ENCODE measurements at regions of chr3 and their contacts with region 1.

Region 1: DNA sequence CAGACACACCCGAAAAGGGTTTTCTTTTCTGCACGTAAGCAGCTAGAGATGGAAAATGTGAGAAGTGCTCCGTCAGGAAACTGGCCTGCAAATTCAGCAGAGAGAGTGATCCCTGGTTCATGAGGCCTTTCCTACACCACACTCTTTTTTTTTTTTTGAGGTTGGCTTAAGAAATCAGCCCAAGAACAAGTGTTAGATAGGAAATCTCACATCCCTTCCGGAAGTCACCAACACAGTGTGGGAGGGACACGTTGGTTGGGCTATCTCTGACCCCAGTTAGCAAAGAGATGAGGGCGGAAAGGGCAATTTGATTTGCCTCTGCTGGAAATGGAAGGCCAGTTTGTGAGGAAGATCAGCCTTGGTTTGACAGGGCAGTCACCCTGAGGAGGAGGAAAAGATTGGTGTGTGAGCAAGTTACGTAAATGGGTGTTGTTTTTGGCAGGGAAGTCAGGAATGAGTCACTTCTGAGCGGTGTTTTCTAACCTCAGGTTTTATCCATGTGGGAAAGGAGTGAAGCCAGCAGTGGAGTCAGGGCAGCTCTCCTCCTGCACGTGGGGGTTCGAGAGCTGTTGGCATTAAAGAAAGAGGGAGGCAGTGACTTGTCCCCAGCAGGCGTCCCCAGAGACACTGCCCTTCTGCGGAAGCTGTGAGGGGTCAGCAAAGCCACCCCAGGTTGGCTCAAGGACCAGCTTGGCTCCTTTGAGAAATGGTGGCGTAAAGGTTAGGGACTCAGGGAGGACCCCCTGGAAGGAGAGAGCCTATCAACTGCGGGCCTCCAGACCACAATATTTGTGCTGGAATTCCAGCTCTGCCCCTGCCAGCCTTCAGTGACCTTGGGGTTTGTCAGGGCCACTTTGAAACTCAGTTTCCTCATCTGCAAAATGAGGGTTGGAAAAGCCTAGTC is 237.6 kb upstream of the BHLHE40 start:
- DNase-seq: no peak
- H3K4me3 Mint-ChIP-seq: peak overlapping the region; percentile 74
- H3K27ac Mint-ChIP-seq: peak overlapping the region; percentile 89
- H3K4me1 Mint-ChIP-seq: peaks cover 79% of the 10 kb centered on the region
- H3K27me3 Mint-ChIP-seq: no peaks in the 10 kb centered on the region

Region 2: DNA sequence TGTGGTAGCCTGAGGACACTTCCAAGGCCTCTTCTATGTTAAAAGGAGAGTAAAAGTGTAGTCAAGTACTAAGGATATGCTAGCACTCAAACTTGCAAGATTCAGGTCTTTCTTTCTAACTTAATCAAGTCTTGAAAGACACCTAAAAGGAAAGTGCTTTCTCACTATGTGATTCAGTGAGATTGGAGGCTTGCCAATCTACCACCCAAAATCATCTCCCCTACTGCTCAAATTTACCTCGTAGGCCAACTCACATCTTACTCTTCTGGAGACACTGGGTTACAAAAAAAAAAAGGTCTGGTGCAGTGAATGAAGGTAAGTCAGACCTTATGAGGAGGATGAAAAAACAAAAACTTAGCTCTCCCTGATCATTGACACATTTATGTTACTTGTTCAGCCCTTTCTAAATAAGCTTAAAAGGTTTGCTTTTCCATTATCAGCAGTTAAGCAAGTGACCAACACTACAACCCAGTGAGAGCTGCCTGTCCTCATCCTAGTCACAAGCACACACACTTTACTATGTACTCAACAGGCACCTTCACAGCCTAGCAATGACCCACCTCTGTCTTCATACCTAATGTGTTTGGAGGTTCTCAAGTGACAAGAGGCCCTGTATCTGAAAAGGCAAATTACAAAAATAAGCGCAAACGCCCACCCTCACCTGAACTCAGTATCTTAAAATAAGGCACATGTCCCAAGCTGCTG is 294.2 kb before region 1 on chr3:
- intact Hi-C with region 1: no loop called
- DNase-seq: no peak
- H3K4me3 Mint-ChIP-seq: no peak overlapping the region
- H3K27ac Mint-ChIP-seq: no peak overlapping the region
- H3K4me1 Mint-ChIP-seq: no peaks in the 10 kb centered on the region
- H3K27me3 Mint-ChIP-seq: no peaks in the 10 kb centered on the region

Region 3: GRCh38 chr3:4797201-4797705 is 55.6 kb after region 1 on chr3:
- intact Hi-C with region 1: no loop called
- DNase-seq: no peak
- H3K4me3 Mint-ChIP-seq: no peak overlapping the region
- H3K27ac Mint-ChIP-seq: no peak overlapping the region
- H3K4me1 Mint-ChIP-seq: peaks cover 12% of the 10 kb centered on the region
- H3K27me3 Mint-ChIP-seq: no peaks in the 10 kb centered on the region

Region 4: GRCh38 chr3:4821975-4822374 is 80.3 kb after region 1 on chr3:
- intact Hi-C with region 1: loop called (anchors 1 kb)
- DNase-seq: peak; percentile 82
- H3K4me3 Mint-ChIP-seq: peak overlapping the region; percentile 86
- H3K27ac Mint-ChIP-seq: peak overlapping the region; percentile 100
- H3K4me1 Mint-ChIP-seq: peaks cover 98% of the 10 kb centered on the region
- H3K27me3 Mint-ChIP-seq: no peaks in the 10 kb centered on the region

Region 5: GRCh38 chr3:5051772-5052171 is 310.1 kb after region 1 on chr3:
- intact Hi-C with region 1: no loop called
- DNase-seq: no peak
- H3K4me3 Mint-ChIP-seq: no peak overlapping the region
- H3K27ac Mint-ChIP-seq: peak overlapping the region; percentile 64
- H3K4me1 Mint-ChIP-seq: peaks cover 48% of the 10 kb centered on the region
- H3K27me3 Mint-ChIP-seq: no peaks in the 10 kb centered on the region

Region 6: GRCh38 chr3:5390221-5390620 is 648.6 kb after region 1 on chr3:
- intact Hi-C with region 1: no loop called
- DNase-seq: no peak
- H3K4me3 Mint-ChIP-seq: no peak overlapping the region
- H3K27ac Mint-ChIP-seq: no peak overlapping the region
- H3K4me1 Mint-ChIP-seq: no peaks in the 10 kb centered on the region
- H3K27me3 Mint-ChIP-seq: peaks cover 1% of the 10 kb centered on the region